ENCODE measurements at regions of chr19 and their contacts with region 1.

Region 1: GRCh38 chr19:54029930-54030490 is 33.7 kb downstream of the VSTM1 start:
- DNase-seq: peak; percentile 71
- H3K4me3 ChIP-seq: no peak overlapping the region; a peak in 1 of 4 replicates
- H3K27ac ChIP-seq: no peak overlapping the region
- H3K4me1 ChIP-seq: no peaks in the 10 kb centered on the region
- H3K27me3 ChIP-seq: no peaks in the 10 kb centered on the region
- CTCF ChIP-seq: peak; percentile 69
- EP300 ChIP-seq: no peak
- RAD21 ChIP-seq: peak; percentile 81

Region 2: DNA sequence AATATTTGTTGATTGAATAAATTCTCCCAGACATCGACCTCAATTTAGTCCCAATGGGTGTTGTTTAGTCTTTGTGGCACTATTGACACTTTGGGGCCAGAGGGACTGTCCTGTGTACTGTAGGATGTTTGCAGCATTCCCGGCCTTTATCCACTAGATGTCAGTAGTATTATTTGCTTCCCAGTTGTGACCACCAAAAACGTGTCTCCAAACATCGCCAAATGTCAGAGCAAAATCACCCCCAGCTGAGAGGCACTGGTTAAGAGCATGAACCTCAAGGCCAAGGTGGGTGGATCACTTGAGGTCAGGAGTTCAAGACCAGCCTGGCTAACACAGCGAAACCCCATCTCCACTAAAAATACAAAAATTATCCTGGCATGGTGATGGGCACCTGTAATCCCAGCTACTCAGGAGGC is 221.3 kb before region 1 on chr19:
- CTCF ChIA-PET with region 1: interaction called, 54 read pairs
- POLR2A ChIA-PET with region 1: no interaction called
- DNase-seq: peak; percentile 49
- H3K4me3 ChIP-seq: peak overlapping the region in 1 of 2 experiments; percentile 52; a peak in 1 of 4 replicates
- H3K27ac ChIP-seq: no peak overlapping the region
- H3K4me1 ChIP-seq: no peaks in the 10 kb centered on the region
- H3K27me3 ChIP-seq: peaks cover 39% of the 10 kb centered on the region
- CTCF ChIP-seq: peak; percentile 79
- EP300 ChIP-seq: no peak
- RAD21 ChIP-seq: peak; percentile 79

Region 3: GRCh38 chr19:53849237-53849676 is 180.8 kb before region 1 on chr19:
- CTCF ChIA-PET with region 1: interaction called, 128 read pairs
- POLR2A ChIA-PET with region 1: no interaction called
- DNase-seq: no peak
- H3K4me3 ChIP-seq: 0 out of 4 replicates have a peak overlapping the region, but pooled peaks of 1 of the 2 experiments have one; percentile 6
- H3K27ac ChIP-seq: peak overlapping the region; percentile 20 to 85; a peak in 3 of 4 replicates
- H3K4me1 ChIP-seq: no peaks in the 10 kb centered on the region
- H3K27me3 ChIP-seq: no peaks in the 10 kb centered on the region
- CTCF ChIP-seq: no peak
- EP300 ChIP-seq: no peak
- RAD21 ChIP-seq: no peak

Region 4: DNA sequence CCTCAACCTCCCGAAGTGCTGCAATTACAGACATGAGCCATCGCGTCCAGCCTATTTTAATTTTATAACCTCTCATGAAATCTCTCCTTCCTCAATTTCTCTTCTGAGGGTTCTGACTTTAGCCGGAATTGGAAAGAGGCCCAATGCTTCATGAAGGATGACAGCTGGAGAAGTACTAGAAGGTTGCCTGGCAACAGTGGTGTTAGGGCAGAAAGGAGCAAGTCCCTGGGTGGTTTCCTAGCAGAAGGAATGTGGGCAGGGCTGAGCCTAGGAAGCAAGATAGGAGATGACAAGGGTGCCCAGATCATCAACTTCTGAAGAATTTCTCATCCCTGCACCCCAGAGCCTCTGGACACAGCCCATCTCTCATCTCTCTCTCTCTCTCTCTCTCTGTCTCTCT is 12.7 kb before region 1 on chr19:
- CTCF ChIA-PET with region 1: interaction called, 21 read pairs
- POLR2A ChIA-PET with region 1: no interaction called
- DNase-seq: no peak
- H3K4me3 ChIP-seq: no peak overlapping the region
- H3K27ac ChIP-seq: no peak overlapping the region
- H3K4me1 ChIP-seq: peaks cover 0 to 8% of the 10 kb centered on the region in 2 experiments; a peak in 1 of 4 replicates
- H3K27me3 ChIP-seq: no peaks in the 10 kb centered on the region
- CTCF ChIP-seq: no peak
- EP300 ChIP-seq: no peak
- RAD21 ChIP-seq: no peak

Region 5: GRCh38 chr19:54047616-54048015 is 17.6 kb after region 1 on chr19:
- CTCF ChIA-PET with region 1: interaction called, 30 read pairs
- POLR2A ChIA-PET with region 1: no interaction called
- DNase-seq: no peak
- H3K4me3 ChIP-seq: no peak overlapping the region
- H3K27ac ChIP-seq: no peak overlapping the region
- H3K4me1 ChIP-seq: no peaks in the 10 kb centered on the region
- H3K27me3 ChIP-seq: peaks cover 56% of the 10 kb centered on the region; the same call in 1 of the 2 replicates
- CTCF ChIP-seq: no peak
- EP300 ChIP-seq: no peak
- RAD21 ChIP-seq: no peak

Region 6: GRCh38 chr19:54115109-54116063 is 85.4 kb after region 1 on chr19 and contains the starts of genes PRPF31 and TFPT:
- CTCF ChIA-PET with region 1: no interaction called
- POLR2A ChIA-PET with region 1: no interaction called
- DNase-seq: peak; percentile 94
- H3K4me3 ChIP-seq: peak within 1 kb of the TSS; percentile 74 to 78
- H3K27ac ChIP-seq: peak within 1 kb of the TSS; percentile 77 to 92
- H3K4me1 ChIP-seq: peaks cover 0 to 14% of the 10 kb centered on the region in 2 experiments; a peak in 1 of 4 replicates
- H3K27me3 ChIP-seq: no peaks in the 10 kb centered on the region
- CTCF ChIP-seq: no peak
- EP300 ChIP-seq: peak in 1 of 2 experiments; percentile 37; a peak in 1 of 4 replicates
- RAD21 ChIP-seq: no peak
- polyA plus RNA-seq, gene PRPF31: 72.2 and 81.0 TPM in 2 replicates
- polyA plus RNA-seq, gene TFPT: 39.8 and 49.7 TPM in 2 replicates

Measured in SK-N-SH (cell line).